ENCODE measurements at regions of chr1 and their contacts with region 1.

Region 1: GRCh38 chr1:230120926-230121381 is 53.9 kb downstream of the GALNT2 start:
- DNase-seq: no peak
- ATAC-seq: no peak
- H3K4me3 ChIP-seq: no peak overlapping the region
- H3K4me3 Mint-ChIP-seq: no peak overlapping the region
- H3K27ac ChIP-seq: no peak overlapping the region
- H3K27ac Mint-ChIP-seq: no peak overlapping the region
- H3K4me1 ChIP-seq: peaks cover 5 to 9% of the 10 kb centered on the region in 2 donors
- H3K4me1 Mint-ChIP-seq: peaks cover 38 to 67% (median 47%) of the 10 kb centered on the region in 7 donors
- H3K27me3 ChIP-seq: no peaks in the 10 kb centered on the region
- H3K27me3 Mint-ChIP-seq: no peaks in the 10 kb centered on the region

Region 2: DNA sequence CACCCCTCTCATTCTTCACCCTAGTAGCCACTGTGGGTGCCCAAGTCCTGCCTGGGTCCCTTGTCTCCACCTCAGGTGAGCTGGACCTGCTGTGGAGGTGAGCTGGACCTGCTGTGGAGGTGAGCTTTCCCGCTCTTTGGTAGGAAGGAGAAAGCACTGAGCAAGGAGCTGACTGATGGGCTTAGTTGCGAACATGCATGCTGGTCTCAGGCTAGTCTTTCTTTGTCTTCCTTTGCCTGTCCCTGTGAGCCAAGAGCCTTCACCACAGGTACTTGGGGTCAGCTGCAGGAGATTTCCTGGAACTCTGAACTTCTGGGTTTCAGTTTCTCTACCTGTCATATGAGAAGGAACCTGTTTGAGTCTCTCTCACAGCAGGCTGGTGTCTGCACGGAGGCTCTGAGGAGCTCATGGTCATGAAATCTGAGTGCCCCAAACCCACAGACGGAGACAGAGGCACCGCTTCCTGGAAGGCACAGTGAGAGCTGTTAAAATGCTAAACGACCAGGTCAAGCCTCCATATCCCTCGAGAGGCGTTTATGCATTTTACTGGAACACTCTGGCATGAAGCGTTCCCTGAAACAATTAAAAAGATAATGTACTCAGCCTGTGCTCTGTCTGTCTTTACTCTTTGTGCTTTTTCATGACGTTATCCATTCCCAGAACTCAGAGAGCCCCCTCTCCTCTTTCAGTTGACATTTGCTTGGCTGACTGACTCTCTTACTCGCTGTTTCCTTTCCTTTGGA is 1316.1 kb before region 1 on chr1:
- CTCF ChIA-PET with region 1: no interaction called
- POLR2A ChIA-PET with region 1: no interaction called
- intact Hi-C with region 1: loop called in 1 of 2 experiments (anchors 10 kb)
- DNase-seq: no peak
- ATAC-seq: peak; percentile 43
- H3K4me3 ChIP-seq: peak overlapping the region; percentile 25
- H3K4me3 Mint-ChIP-seq: peak overlapping the region; percentile 39 to 77 (median 66)
- H3K27ac ChIP-seq: no peak overlapping the region
- H3K27ac Mint-ChIP-seq: peak overlapping the region; percentile 35 to 90 (median 80)
- H3K4me1 ChIP-seq: peaks cover 6 to 13% of the 10 kb centered on the region in 2 donors
- H3K4me1 Mint-ChIP-seq: peaks cover 20 to 76% (median 41%) of the 10 kb centered on the region in 7 donors
- H3K27me3 ChIP-seq: no peaks in the 10 kb centered on the region
- H3K27me3 Mint-ChIP-seq: no peaks in the 10 kb centered on the region

Region 3: GRCh38 chr1:230109895-230110667 is 10.9 kb before region 1 on chr1:
- CTCF ChIA-PET with region 1: no interaction called
- POLR2A ChIA-PET with region 1: no interaction called
- intact Hi-C with region 1: loop called in 1 of 2 experiments (anchors 1 kb)
- DNase-seq: peak in 7 of 9 donors; percentile 25 to 72 (median 47)
- ATAC-seq: peak; percentile 73
- H3K4me3 ChIP-seq: no peak overlapping the region
- H3K4me3 Mint-ChIP-seq: peak overlapping the region in 6 of 10 donors; percentile 21 to 54 (median 39)
- H3K27ac ChIP-seq: no peak overlapping the region
- H3K27ac Mint-ChIP-seq: peak overlapping the region in 6 of 9 donors; percentile 34 to 84 (median 58)
- H3K4me1 ChIP-seq: peaks cover 0 to 4% of the 10 kb centered on the region in 2 donors
- H3K4me1 Mint-ChIP-seq: peaks cover 43 to 85% (median 68%) of the 10 kb centered on the region in 7 donors
- H3K27me3 ChIP-seq: no peaks in the 10 kb centered on the region
- H3K27me3 Mint-ChIP-seq: no peaks in the 10 kb centered on the region